ENCODE measurements at regions of chr15 and their contacts with region 1.

Region 1: DNA sequence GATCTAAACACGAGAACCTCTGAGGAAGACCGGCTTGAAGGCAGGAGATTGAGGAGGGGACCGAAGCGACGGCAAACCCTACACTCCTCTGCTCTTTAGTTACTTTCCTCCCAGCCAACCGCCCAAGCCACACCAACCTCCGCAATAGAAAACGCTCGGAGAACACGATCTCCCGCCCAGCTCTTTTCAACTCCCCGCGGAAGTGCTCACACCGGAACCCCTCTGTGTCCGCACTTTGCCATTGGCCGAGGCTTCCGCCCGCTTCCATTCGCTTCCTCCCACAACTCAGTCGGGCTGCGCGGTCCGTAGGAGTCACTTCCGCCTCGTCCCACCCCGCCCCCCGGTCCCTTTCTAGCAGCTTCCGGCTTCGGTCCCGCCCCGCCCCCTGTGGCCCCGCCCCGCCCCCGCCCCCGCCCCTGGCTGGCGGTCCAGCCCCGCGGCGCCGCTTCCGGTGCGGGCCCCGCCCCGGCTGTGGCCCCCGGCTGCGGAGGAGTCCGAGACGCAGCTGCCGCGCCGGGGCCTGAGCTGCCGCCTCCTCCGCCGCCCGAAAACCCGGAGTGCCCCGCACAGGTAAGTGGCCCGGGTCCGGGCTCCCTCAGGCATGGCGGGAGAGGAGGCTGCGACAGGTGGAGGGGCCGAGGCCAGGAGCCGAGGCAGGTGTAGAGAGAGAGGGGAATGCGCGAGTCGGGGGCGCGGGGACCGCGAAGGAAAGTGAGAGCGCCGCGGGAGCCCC is at the start of gene ARID3B:
- DNase-seq: peak; percentile 96
- H3K4me3 ChIP-seq: peak within 1 kb of the TSS; percentile 83 to 88 (median 83)
- H3K27ac ChIP-seq: peak within 1 kb of the TSS; percentile 66 to 76
- H3K4me1 ChIP-seq: peaks cover 10 to 11% of the 10 kb centered on the region in 2 donors
- H3K27me3 ChIP-seq: no peaks in the 10 kb centered on the region
- CTCF ChIP-seq: no peak
- POLR2A ChIP-seq: no peak
- total RNA-seq, gene ARID3B: 5.2 to 6.0 (median 5.9) TPM

Region 2: DNA sequence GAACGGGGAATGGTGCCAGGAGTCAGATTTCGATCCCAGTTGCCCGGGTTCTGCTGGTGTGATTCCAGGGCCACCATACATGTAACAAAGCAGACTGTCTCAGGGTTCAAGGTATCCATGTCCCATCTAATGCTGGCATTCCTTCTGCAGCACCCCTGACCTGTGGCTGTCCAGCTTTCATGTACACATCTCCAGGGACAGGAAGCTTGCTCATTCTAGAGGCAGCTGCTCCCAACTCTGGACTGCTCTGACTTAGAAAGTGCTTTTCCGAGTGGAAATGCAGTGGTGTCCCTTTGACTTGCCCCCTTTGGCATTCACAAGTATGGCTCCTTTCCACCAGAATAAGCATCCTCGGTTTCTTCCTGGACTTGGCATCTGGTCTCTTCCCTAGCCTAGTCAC is 515.5 kb before region 1 on chr15:
- intact Hi-C with region 1: no loop called
- DNase-seq: peak in 1 of 2 donors; percentile 12
- H3K4me3 ChIP-seq: no peak overlapping the region
- H3K27ac ChIP-seq: peak overlapping the region; percentile 25 to 27
- H3K4me1 ChIP-seq: no peaks in the 10 kb centered on the region
- H3K27me3 ChIP-seq: no peaks in the 10 kb centered on the region
- CTCF ChIP-seq: no peak
- POLR2A ChIP-seq: no peak

Region 3: GRCh38 chr15:74584779-74585178 is 43.9 kb after region 1 on chr15:
- intact Hi-C with region 1: no loop called
- DNase-seq: no peak
- H3K4me3 ChIP-seq: no peak overlapping the region
- H3K27ac ChIP-seq: no peak overlapping the region
- H3K4me1 ChIP-seq: no peaks in the 10 kb centered on the region
- H3K27me3 ChIP-seq: no peaks in the 10 kb centered on the region
- CTCF ChIP-seq: no peak
- POLR2A ChIP-seq: no peak

Region 4: DNA sequence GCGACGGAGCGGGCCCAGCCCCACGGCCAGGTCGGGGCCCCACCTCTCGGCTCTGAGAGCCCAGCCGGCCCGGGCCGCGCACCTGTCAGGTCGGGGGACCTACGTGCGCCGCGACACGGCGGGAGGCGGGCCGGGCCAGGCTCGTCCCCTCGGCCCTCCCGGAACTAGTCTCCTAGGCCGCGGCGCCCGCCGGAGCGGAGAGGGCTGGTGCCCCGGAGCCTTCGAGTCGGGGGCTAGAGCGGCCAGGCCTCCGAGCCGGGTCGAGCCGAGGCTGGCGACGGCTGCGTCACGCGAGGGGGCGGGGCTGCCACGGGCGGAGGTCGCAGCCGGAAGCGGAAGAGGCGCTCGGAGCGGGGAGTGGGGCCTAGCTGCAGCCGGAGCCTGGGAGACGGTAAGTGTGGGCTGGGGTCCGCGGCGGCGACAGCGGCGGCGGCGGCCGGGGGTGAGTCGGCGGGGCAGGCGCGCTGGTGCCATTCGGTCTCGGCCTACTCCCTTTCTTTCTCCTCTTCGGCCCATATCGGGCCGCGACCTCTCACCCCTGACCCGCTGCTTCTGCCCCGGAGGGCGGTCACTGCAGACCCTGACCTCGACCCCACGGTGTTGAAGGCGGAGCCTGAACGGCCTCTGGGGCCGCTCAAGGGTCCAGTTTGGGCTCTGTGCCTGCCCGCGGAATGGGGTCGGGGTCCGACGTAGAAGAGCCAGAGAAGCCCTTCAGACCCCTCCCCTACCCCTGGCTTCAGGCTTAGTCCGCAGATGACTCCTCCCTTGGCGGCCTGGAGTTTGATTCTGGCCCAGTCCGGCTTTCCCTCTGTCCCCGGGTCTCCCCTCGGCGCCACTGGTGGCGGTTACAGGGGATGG is 74.8 kb after region 1 on chr15 and contains the start of gene CLK3:
- intact Hi-C with region 1: loop called (anchors 10 kb)
- DNase-seq: peak; percentile 93 to 95
- H3K4me3 ChIP-seq: peak within 1 kb of the TSS; percentile 90 to 99 (median 98)
- H3K27ac ChIP-seq: peak within 1 kb of the TSS; percentile 99
- H3K4me1 ChIP-seq: peaks cover 0 to 29% of the 10 kb centered on the region in 2 donors
- H3K27me3 ChIP-seq: no peaks in the 10 kb centered on the region
- CTCF ChIP-seq: no peak
- POLR2A ChIP-seq: peak; percentile 65
- total RNA-seq, gene CLK3: 99.2 to 110 (median 101) TPM

Measured in breast epithelium (tissue), 4 donors.